ENCODE measurements at regions of chr5 and their contacts with region 1.

Region 1: DNA sequence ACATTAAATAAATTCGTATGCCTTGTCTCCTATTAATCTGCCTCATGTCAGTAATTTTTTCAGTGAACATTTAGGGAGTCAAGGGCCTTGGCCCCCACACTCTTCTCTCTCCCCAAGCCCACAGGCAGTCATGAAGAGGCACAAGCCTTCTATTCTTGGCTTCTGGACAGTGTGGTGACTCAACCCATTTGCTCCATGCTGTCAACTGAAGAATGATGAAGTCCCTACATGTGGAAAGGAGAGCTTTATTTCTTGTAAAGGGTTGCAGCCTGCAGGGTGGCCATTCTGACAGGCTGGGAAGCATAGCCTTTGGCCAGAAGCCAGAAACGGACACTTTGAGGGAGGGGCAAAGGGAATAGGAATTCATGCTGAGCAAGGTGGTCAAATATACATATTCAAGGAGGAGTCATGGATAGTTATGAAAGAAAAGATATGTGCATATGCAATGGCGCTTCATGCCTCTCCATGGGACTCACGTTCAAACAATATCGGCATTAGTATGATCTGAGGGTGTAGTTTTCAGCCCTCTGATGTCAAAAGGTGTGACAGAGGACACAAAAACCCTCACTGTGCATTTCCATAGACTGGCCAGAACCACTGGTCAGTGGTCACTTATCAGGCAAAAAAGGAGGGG is 31.3 kb downstream of the ANKRA2 start:
- DNase-seq: no peak
- H3K4me3 Mint-ChIP-seq: no peak overlapping the region
- H3K27ac Mint-ChIP-seq: no peak overlapping the region
- H3K4me1 Mint-ChIP-seq: no peaks in the 10 kb centered on the region
- H3K27me3 Mint-ChIP-seq: peaks cover 39% of the 10 kb centered on the region

Region 2: GRCh38 chr5:73519531-73520283 is 14.4 kb before region 1 on chr5:
- CTCF ChIA-PET with region 1: interaction called, 41 read pairs
- POLR2A ChIA-PET with region 1: no interaction called
- DNase-seq: peak; percentile 81
- H3K4me3 Mint-ChIP-seq: peak overlapping the region; percentile 11
- H3K27ac Mint-ChIP-seq: peak overlapping the region; percentile 48
- H3K4me1 Mint-ChIP-seq: peaks cover 7% of the 10 kb centered on the region
- H3K27me3 Mint-ChIP-seq: no peaks in the 10 kb centered on the region